Naive thymus-derived CD4-positive, alpha-beta T cell (primary cell): ENCODE measurements at regions of chr5 and their contacts with region 1.

Region 1: GRCh38 chr5:132526290-132526973 is 16.9 kb downstream of the IL5 start:
- DNase-seq: peak in 8 of 9 donors; percentile 14 to 67 (median 50)
- ATAC-seq: peak; percentile 81
- H3K4me3 ChIP-seq: no peak overlapping the region
- H3K4me3 Mint-ChIP-seq: peak overlapping the region in 1 of 10 donors; percentile 15
- H3K27ac ChIP-seq: no peak overlapping the region
- H3K27ac Mint-ChIP-seq: no peak overlapping the region
- H3K4me1 ChIP-seq: peaks cover 4% of the 10 kb centered on the region in 2 donors
- H3K4me1 Mint-ChIP-seq: peaks cover 12 to 51% (median 16%) of the 10 kb centered on the region in 7 donors
- H3K27me3 ChIP-seq: no peaks in the 10 kb centered on the region
- H3K27me3 Mint-ChIP-seq: peaks cover 0 to 1% (median under 1%) of the 10 kb centered on the region in 5 donors

Region 2: GRCh38 chr5:131563434-131564228 is 962.8 kb before region 1 on chr5:
- CTCF ChIA-PET with region 1: interaction called, 11 read pairs
- POLR2A ChIA-PET with region 1: no interaction called
- intact Hi-C with region 1: no loop called
- DNase-seq: peak in 1 of 9 donors; percentile 10
- ATAC-seq: no peak
- H3K4me3 ChIP-seq: no peak overlapping the region
- H3K4me3 Mint-ChIP-seq: peak overlapping the region in 5 of 10 donors; percentile 1 to 33 (median 19)
- H3K27ac ChIP-seq: no peak overlapping the region
- H3K27ac Mint-ChIP-seq: peak overlapping the region in 7 of 9 donors; percentile 10 to 77 (median 57)
- H3K4me1 ChIP-seq: peaks cover 0 to 11% of the 10 kb centered on the region in 2 donors
- H3K4me1 Mint-ChIP-seq: peaks cover 18 to 74% (median 60%) of the 10 kb centered on the region in 7 donors
- H3K27me3 ChIP-seq: no peaks in the 10 kb centered on the region
- H3K27me3 Mint-ChIP-seq: no peaks in the 10 kb centered on the region

Region 3: DNA sequence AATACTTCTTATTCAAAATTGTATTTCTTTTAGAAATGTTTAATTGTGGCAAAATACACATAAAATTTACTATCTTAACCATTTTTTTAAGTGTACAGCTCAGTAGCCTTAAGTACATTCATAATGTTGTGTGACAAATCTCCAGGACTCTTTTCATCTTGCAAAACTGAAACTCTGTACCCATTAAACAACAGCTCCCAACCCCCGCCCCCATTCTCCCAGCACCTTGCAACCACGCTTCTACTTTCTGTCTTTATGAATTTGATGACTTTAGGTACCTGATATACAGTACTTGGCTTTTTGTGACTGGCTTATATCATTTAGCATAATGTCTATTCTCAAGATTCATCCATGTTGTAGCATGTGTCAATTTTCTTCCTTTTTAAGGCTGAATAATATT is 19.7 kb after region 1 on chr5:
- CTCF ChIA-PET with region 1: no interaction called
- POLR2A ChIA-PET with region 1: no interaction called
- intact Hi-C with region 1: no loop called
- DNase-seq: peak in 1 of 9 donors; percentile 60
- ATAC-seq: no peak
- H3K4me3 ChIP-seq: no peak overlapping the region
- H3K4me3 Mint-ChIP-seq: no peak overlapping the region
- H3K27ac ChIP-seq: no peak overlapping the region
- H3K27ac Mint-ChIP-seq: no peak overlapping the region
- H3K4me1 ChIP-seq: no peaks in the 10 kb centered on the region
- H3K4me1 Mint-ChIP-seq: peaks cover 0 to 33% (median 0%) of the 10 kb centered on the region in 7 donors
- H3K27me3 ChIP-seq: no peaks in the 10 kb centered on the region
- H3K27me3 Mint-ChIP-seq: peaks cover 0 to 4% (median 0%) of the 10 kb centered on the region in 5 donors

Region 4: GRCh38 chr5:132576123-132576522 is 49.7 kb after region 1 on chr5:
- CTCF ChIA-PET with region 1: no interaction called
- POLR2A ChIA-PET with region 1: no interaction called
- intact Hi-C with region 1: loop called in 1 of 2 experiments (anchors 5 kb)
- DNase-seq: no peak
- ATAC-seq: no peak
- H3K4me3 ChIP-seq: no peak overlapping the region
- H3K4me3 Mint-ChIP-seq: no peak overlapping the region
- H3K27ac ChIP-seq: no peak overlapping the region
- H3K27ac Mint-ChIP-seq: no peak overlapping the region
- H3K4me1 ChIP-seq: no peaks in the 10 kb centered on the region
- H3K4me1 Mint-ChIP-seq: peaks cover 0 to 11% (median under 1%) of the 10 kb centered on the region in 7 donors
- H3K27me3 ChIP-seq: no peaks in the 10 kb centered on the region
- H3K27me3 Mint-ChIP-seq: no peaks in the 10 kb centered on the region

Region 5: DNA sequence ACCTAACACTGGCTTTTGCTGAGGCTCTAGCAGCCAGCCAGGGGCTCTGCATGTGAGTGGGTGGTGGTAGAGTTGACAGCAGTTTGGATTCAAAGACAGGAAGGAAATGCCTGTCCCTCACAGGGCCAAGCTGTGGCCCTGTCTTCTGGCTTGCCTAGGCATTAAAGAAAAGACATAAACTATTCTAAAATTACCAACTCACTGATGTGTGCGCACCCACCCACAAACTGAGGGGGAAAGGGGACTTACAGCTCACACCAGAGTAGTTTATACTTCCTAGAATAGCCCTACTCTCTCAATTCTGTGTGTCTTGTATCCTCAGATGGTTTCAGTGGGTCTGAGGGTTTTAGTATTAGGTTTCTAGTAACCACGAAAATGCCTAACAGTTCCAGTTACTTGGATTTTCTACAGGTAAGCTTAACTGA is 113.3 kb after region 1 on chr5:
- CTCF ChIA-PET with region 1: no interaction called
- POLR2A ChIA-PET with region 1: no interaction called
- intact Hi-C with region 1: loop called in 1 of 2 experiments (anchors 5 kb)
- DNase-seq: no peak
- ATAC-seq: no peak
- H3K4me3 ChIP-seq: no peak overlapping the region
- H3K4me3 Mint-ChIP-seq: peak overlapping the region in 1 of 10 donors; percentile 55
- H3K27ac ChIP-seq: no peak overlapping the region
- H3K27ac Mint-ChIP-seq: peak overlapping the region in 2 of 9 donors; percentile 32 to 64
- H3K4me1 ChIP-seq: no peaks in the 10 kb centered on the region
- H3K4me1 Mint-ChIP-seq: peaks cover 0 to 87% (median 0%) of the 10 kb centered on the region in 7 donors
- H3K27me3 ChIP-seq: no peaks in the 10 kb centered on the region
- H3K27me3 Mint-ChIP-seq: no peaks in the 10 kb centered on the region

Region 6: DNA sequence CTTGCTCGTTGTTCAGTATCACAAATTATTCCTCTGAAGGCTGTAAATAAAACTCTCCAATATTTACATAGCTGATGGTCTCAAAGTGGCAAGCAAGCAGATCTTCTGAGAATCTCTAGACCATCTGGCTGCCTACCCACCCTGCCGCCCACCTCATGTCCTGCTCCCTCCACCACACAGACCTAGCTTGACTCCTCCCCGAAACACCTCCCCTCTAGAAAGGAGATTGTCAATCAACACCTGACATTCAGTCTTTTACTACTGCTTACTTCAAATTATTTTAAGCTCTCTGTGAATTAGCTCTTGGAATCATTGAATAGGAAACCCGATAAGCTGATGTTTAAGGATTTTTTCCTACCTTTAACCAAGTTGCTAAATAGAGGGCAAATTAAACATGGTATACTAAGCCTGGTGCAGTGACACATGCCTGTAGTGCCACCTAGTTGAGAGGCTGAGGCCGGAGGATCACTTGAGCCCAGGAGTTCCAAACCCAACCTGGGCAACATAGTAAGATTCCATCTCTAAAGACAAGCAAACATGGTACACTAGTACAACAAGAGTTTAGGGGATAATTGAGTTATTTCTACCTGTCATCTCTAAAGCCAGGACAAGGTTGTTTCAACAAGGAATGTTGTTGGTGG is 275.7 kb after region 1 on chr5:
- CTCF ChIA-PET with region 1: no interaction called
- POLR2A ChIA-PET with region 1: no interaction called
- intact Hi-C with region 1: loop called in 1 of 2 experiments (anchors 1 kb)
- DNase-seq: no peak
- ATAC-seq: no peak
- H3K4me3 ChIP-seq: no peak overlapping the region
- H3K4me3 Mint-ChIP-seq: no peak overlapping the region
- H3K27ac ChIP-seq: no peak overlapping the region
- H3K27ac Mint-ChIP-seq: no peak overlapping the region
- H3K4me1 ChIP-seq: no peaks in the 10 kb centered on the region
- H3K4me1 Mint-ChIP-seq: peaks cover 0 to under 1% (median 0%) of the 10 kb centered on the region in 7 donors
- H3K27me3 ChIP-seq: no peaks in the 10 kb centered on the region
- H3K27me3 Mint-ChIP-seq: peaks cover 46 to 71% (median 62%) of the 10 kb centered on the region in 5 donors

Region 7: DNA sequence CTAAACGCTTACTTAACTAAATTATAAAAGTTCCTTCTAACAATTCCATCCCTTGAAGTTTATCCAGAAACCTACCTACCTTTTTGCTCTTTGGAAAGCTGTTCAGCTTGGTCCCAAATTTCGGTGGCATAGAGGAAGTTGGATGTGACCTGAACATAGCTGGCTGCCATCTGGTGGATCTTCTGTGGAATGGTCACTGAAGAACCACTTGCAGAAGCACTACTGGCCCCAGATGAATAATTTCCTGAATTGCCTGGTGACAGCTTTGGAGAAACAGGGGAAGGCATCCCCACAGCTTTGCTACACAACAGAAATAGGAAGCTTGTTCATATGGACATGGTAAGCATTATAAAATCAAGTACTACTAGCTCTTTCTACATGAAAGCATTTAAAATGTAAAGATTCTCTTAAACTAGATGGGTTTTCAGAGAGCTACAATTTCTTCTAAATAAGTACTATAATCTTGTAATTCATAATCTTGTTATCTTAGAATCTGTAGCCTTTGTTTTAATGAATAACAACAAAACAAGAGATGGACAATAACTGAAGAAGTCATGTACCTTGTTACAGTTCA is 356.9 kb after region 1 on chr5:
- CTCF ChIA-PET with region 1: no interaction called
- POLR2A ChIA-PET with region 1: no interaction called
- intact Hi-C with region 1: loop called in 1 of 2 experiments (anchors 10 kb)
- DNase-seq: peak in 6 of 9 donors; percentile 12 to 31 (median 19)
- ATAC-seq: peak; percentile 86
- H3K4me3 ChIP-seq: no peak overlapping the region
- H3K4me3 Mint-ChIP-seq: no peak overlapping the region
- H3K27ac ChIP-seq: no peak overlapping the region
- H3K27ac Mint-ChIP-seq: peak overlapping the region in 5 of 9 donors; percentile 0 to 73 (median 52)
- H3K4me1 ChIP-seq: no peaks in the 10 kb centered on the region
- H3K4me1 Mint-ChIP-seq: peaks cover 0 to 8% (median 0%) of the 10 kb centered on the region in 7 donors
- H3K27me3 ChIP-seq: no peaks in the 10 kb centered on the region
- H3K27me3 Mint-ChIP-seq: no peaks in the 10 kb centered on the region

Region 8: DNA sequence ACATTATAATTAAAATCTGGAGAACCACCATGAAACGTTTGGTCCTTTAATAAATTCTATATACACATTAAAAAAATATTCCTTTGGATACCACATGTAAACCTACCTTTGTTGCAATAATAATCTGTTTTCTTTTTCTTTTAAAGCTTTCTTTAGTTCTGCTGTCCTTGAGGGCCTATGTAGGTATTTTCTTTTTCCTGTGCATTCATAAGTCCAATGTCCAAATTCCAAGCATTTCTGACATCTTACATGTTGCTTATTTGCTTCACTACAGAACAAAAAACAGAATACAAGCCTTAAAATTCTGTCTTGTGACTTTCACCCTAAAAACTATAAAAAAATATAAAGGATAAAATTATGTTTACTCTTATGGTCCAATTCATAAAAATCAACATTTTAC is 480.2 kb after region 1 on chr5:
- CTCF ChIA-PET with region 1: no interaction called
- POLR2A ChIA-PET with region 1: no interaction called
- intact Hi-C with region 1: no loop called
- DNase-seq: no peak
- ATAC-seq: no peak
- H3K4me3 ChIP-seq: no peak overlapping the region
- H3K4me3 Mint-ChIP-seq: no peak overlapping the region
- H3K27ac ChIP-seq: no peak overlapping the region
- H3K27ac Mint-ChIP-seq: no peak overlapping the region
- H3K4me1 ChIP-seq: no peaks in the 10 kb centered on the region
- H3K4me1 Mint-ChIP-seq: peaks cover 0 to 4% (median 0%) of the 10 kb centered on the region in 7 donors
- H3K27me3 ChIP-seq: no peaks in the 10 kb centered on the region
- H3K27me3 Mint-ChIP-seq: no peaks in the 10 kb centered on the region